Activated B cell treated with CpG ODN at 0.5 μM for 24 hours (primary cell): ENCODE measurements at regions of chr2 and their contacts with region 1.

Region 1: DNA sequence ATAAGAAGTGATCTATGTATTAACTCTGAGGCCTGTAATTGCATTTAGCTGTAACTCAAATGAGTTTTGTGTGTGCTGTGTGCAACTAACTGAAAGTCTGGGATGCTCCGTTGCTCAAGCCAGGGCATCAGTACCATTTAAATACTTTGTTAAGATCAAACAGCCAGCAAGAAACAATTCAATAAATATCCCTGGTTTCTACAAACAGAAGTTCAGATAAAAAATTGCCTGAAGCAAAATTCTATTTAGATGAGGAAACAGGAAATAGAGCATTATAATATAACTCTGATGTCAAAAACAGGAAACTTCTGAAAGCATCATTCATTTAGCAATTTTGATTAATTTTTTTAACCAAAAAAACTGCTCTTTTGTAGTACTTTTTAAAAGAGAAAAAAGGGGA is 18.9 kb upstream of the SLC38A11 start:
- DNase-seq: no peak
- ATAC-seq: no peak
- H3K4me3 Mint-ChIP-seq: peak overlapping the region; percentile 32
- H3K27ac Mint-ChIP-seq: peak overlapping the region; percentile 57
- H3K4me1 Mint-ChIP-seq: peaks cover 85% of the 10 kb centered on the region
- H3K27me3 Mint-ChIP-seq: no peaks in the 10 kb centered on the region
- CTCF ChIP-seq: no peak

Region 2: DNA sequence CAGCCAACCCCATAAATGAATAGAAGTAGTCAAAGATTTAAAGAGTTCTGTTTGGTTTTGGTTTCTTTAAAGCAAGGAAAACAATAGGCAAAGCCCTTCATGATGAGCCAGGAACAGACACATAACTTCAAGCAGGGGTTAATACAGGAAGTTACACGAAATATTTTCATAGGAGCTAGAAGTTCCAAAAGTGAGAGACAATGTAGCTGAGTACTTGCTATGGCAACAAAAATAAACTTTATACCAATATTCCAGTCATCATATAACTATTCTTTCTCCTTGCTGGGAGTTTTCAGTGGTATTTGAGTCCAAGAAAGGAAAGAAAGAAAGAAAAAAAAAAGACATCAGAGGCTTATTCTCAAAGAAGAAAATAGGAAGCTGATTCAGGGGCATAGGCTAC is 188.8 kb before region 1 on chr2:
- CTCF ChIA-PET with region 1: no interaction called
- POLR2A ChIA-PET with region 1: no interaction called
- intact Hi-C with region 1: no loop called
- DNase-seq: no peak
- ATAC-seq: no peak
- H3K4me3 Mint-ChIP-seq: no peak overlapping the region
- H3K27ac Mint-ChIP-seq: no peak overlapping the region
- H3K4me1 Mint-ChIP-seq: peaks cover 32% of the 10 kb centered on the region
- H3K27me3 Mint-ChIP-seq: no peaks in the 10 kb centered on the region
- CTCF ChIP-seq: no peak

Region 3: GRCh38 chr2:164873095-164873908 is 100.9 kb before region 1 on chr2:
- CTCF ChIA-PET with region 1: no interaction called
- POLR2A ChIA-PET with region 1: no interaction called
- intact Hi-C with region 1: no loop called
- DNase-seq: no peak
- ATAC-seq: no peak
- H3K4me3 Mint-ChIP-seq: no peak overlapping the region
- H3K27ac Mint-ChIP-seq: no peak overlapping the region
- H3K4me1 Mint-ChIP-seq: peaks cover 20% of the 10 kb centered on the region
- H3K27me3 Mint-ChIP-seq: no peaks in the 10 kb centered on the region
- CTCF ChIP-seq: no peak

Region 4: GRCh38 chr2:164954954-164955701 is 19.1 kb before region 1 on chr2 and contains the start of gene SLC38A11:
- CTCF ChIA-PET with region 1: interaction called, 5 read pairs
- POLR2A ChIA-PET with region 1: interaction called, 3 read pairs
- intact Hi-C with region 1: loop called (anchors 2 kb)
- DNase-seq: peak; percentile 20
- ATAC-seq: peak; percentile 66
- H3K4me3 Mint-ChIP-seq: peak within 1 kb of the TSS; percentile 66
- H3K27ac Mint-ChIP-seq: peak within 1 kb of the TSS; percentile 18
- H3K4me1 Mint-ChIP-seq: peaks cover 29% of the 10 kb centered on the region
- H3K27me3 Mint-ChIP-seq: peaks cover 2% of the 10 kb centered on the region
- CTCF ChIP-seq: no peak
- total RNA-seq, gene SLC38A11: 2.2 and 2.6 TPM in 2 replicates

Region 5: DNA sequence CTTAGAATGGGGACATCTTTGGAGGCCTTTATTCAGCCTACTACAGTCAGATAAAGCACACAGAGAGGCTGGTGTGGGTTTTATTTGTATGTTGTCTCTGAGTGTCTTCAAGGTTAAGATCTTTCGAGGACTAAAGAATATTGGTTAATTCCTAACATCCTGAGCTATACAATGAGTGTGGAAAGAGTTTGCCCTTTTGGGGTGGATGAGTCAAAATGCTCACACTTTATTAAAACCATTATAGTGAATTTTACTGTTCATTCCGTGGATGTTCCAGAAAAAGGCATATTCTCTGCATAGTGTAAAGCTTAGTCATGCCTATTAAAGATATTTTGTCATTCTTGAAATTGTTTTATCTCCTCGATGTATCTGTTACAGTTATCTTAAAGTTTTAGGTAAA is 10.2 kb after region 1 on chr2:
- CTCF ChIA-PET with region 1: no interaction called
- POLR2A ChIA-PET with region 1: no interaction called
- intact Hi-C with region 1: no loop called
- DNase-seq: no peak
- ATAC-seq: no peak
- H3K4me3 Mint-ChIP-seq: no peak overlapping the region
- H3K27ac Mint-ChIP-seq: no peak overlapping the region
- H3K4me1 Mint-ChIP-seq: peaks cover 41% of the 10 kb centered on the region
- H3K27me3 Mint-ChIP-seq: no peaks in the 10 kb centered on the region
- CTCF ChIP-seq: no peak